ENCODE measurements at regions of chr16 and their contacts with region 1.

Region 1: GRCh38 chr16:50671644-50672260 is 9.4 kb downstream of the SNX20 start:
- DNase-seq: peak; percentile 64
- ATAC-seq: peak; percentile 74
- H3K4me3 ChIP-seq: no peak overlapping the region
- H3K27ac ChIP-seq: no peak overlapping the region
- H3K4me1 ChIP-seq: no peaks in the 10 kb centered on the region
- H3K27me3 ChIP-seq: no peaks in the 10 kb centered on the region
- CTCF ChIP-seq: peak; percentile 73 to 91 (median 78); a peak in 5 of 6 replicates
- POLR2A ChIP-seq: no peak
- RAD21 ChIP-seq: peak; percentile 74

Region 2: DNA sequence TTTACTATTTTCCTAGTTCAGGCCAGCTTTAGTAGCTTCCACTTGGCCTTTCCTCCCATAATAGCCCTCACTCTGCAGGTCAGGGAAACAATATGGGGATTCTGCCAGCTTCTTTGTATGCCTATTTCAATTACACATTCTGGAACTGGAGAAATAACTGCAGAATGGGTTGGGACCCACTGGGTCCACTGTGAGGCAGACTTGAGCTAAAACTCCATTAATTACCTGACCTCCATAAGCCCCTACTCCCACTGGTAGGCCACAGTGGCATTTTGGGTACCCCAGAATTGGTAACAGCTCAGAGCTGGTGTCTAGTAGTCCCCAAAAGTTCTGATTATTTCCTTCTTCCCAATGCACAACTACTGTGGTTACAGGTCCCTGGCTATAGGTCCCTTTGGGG is 535.4 kb before region 1 on chr16:
- CTCF ChIA-PET with region 1: no interaction called
- POLR2A ChIA-PET with region 1: no interaction called
- RAD21 ChIA-PET with region 1: no interaction called
- intact Hi-C with region 1: loop called (anchors 10 kb)
- DNase-seq: no peak
- ATAC-seq: no peak
- H3K4me3 ChIP-seq: no peak overlapping the region
- H3K27ac ChIP-seq: no peak overlapping the region
- H3K4me1 ChIP-seq: no peaks in the 10 kb centered on the region
- H3K27me3 ChIP-seq: no peaks in the 10 kb centered on the region
- CTCF ChIP-seq: no peak
- POLR2A ChIP-seq: no peak
- RAD21 ChIP-seq: no peak; the same call in 1 of the 2 replicates

Region 3: DNA sequence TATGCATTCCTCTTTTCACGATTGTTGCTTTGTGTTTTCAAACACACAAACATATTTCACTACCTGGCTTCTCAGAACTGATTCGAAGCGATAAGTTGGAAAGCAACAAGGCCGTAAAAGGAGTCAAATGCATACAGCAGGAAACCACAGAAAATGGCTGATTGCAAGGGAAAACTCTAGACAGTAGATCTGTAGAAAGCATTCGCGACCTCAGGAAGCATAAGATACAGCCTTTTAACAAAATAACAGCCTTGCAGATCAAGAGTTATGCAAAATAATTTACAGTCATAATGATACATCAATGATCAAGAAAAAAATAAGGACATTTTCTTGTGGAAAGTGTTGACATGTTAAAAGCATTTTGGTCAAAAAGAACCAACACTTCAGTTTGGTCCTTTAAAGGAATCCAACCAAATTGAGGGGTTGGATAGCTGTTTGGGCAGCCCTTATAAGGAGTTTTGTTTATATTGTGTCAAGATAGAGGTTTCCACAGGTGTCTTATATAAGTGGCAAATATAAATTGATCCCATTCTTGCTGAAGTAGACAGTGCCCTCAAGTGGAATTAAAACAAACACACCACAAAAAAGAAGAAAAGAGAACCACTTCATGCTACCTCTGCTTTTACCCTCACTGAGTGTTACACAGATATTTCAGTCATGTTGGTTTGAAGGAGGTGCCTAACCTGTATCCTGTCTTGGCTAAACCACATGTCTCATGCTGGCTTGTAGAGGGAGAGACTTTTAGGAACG is 75.6 kb after region 1 on chr16:
- CTCF ChIA-PET with region 1: interaction called, 3 read pairs
- POLR2A ChIA-PET with region 1: no interaction called
- RAD21 ChIA-PET with region 1: no interaction called
- intact Hi-C with region 1: loop called (anchors 1 kb)
- DNase-seq: peak; percentile 15
- ATAC-seq: peak; percentile 65
- H3K4me3 ChIP-seq: no peak overlapping the region
- H3K27ac ChIP-seq: no peak overlapping the region
- H3K4me1 ChIP-seq: peaks cover 0 to 7% of the 10 kb centered on the region in 2 experiments; a peak in 1 of 4 replicates
- H3K27me3 ChIP-seq: no peaks in the 10 kb centered on the region
- CTCF ChIP-seq: peak in 2 of 3 experiments; percentile 32 to 52; a peak in 3 of 6 replicates
- POLR2A ChIP-seq: no peak
- RAD21 ChIP-seq: peak; percentile 61

Region 4: DNA sequence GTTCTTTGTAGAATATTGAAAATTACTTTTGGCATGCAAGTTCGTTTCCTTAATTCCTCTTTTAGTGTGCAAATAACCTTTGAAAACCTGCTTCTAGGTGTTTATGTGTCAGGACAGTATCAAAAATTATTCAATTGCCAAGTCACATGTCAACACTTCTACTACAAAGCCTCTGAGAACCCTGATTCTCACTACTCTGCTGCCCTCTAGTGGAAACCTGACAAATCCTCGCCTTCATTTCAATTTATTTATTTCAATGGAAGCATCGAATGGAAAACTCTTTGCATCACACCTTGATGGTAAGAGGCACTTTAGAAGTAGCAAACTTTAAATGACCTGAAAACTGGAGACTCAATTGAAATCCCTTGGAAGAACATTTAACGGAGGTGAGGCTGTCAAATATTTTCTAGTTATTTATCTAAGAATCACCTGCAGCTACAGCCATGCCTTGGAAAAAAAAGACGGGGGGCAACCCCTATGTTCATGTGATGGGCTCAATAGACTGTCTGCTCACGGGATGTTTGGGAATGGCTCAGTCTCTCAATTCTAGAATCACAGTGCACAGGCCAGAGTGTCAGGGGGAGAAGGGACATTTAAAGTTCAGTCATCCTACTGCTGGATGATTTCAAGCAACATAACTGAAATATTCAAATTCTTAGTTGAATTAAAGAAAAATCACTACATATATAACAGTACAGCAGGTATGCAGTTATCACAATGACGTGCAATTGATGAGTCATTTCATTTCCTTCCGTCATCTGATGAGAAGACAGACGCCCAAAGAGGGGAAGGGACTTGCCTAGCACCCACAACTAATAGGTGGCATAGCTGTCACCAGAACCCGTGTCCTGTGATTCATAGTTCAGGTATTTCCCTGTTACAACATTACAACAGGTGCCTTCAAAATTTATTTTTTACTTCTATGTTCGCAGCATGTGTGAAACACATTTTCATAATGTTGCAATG is 1311.2 kb after region 1 on chr16:
- CTCF ChIA-PET with region 1: no interaction called
- POLR2A ChIA-PET with region 1: no interaction called
- RAD21 ChIA-PET with region 1: no interaction called
- intact Hi-C with region 1: loop called (anchors 10 kb)
- DNase-seq: peak; percentile 33
- ATAC-seq: no peak
- H3K4me3 ChIP-seq: no peak overlapping the region
- H3K27ac ChIP-seq: no peak overlapping the region
- H3K4me1 ChIP-seq: no peaks in the 10 kb centered on the region
- H3K27me3 ChIP-seq: no peaks in the 10 kb centered on the region
- CTCF ChIP-seq: peak; percentile 14 to 72 (median 52); a peak in 4 of 6 replicates
- POLR2A ChIP-seq: no peak
- RAD21 ChIP-seq: peak; percentile 58